ENCODE measurements at regions of chr20 and their contacts with region 1.

Region 1: DNA sequence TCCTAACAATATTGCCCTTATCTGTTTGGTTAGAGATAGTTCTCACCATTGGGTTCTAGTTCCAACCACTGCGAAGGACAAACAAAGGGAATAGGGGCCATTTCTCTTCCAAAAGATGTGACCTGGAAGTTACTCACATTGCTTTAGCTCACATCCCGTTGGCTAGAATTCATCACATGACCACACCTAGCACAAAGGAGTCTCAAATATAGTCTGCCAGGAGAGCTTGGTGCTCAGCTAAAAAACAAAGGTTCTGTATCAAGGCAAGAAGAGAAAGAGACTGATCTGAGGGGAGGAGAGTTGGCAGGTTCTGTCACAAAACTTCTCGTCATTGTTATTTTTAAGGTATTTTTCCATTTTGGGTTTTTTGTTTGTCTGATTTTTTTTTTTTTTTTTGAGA is 69.8 kb upstream of the GNRH2 start:
- DNase-seq: no peak
- ATAC-seq: no peak
- H3K4me3 ChIP-seq: no peak overlapping the region
- H3K27ac ChIP-seq: no peak overlapping the region
- H3K4me1 ChIP-seq: no peaks in the 10 kb centered on the region
- H3K27me3 ChIP-seq: no peaks in the 10 kb centered on the region
- CTCF ChIP-seq: no peak

Region 2: GRCh38 chr20:2005831-2006426 is 967.6 kb before region 1 on chr20:
- CTCF ChIA-PET with region 1: interaction called, 11 read pairs
- POLR2A ChIA-PET with region 1: no interaction called
- intact Hi-C with region 1: no loop called
- DNase-seq: peak; percentile 81
- ATAC-seq: peak; percentile 54; the same call in 1 of the 2 replicates
- H3K4me3 ChIP-seq: no peak overlapping the region
- H3K27ac ChIP-seq: no peak overlapping the region
- H3K4me1 ChIP-seq: no peaks in the 10 kb centered on the region
- H3K27me3 ChIP-seq: peaks cover 33% of the 10 kb centered on the region; the same call in 1 of the 2 replicates
- CTCF ChIP-seq: no peak

Region 3: GRCh38 chr20:2873747-2874041 is 99.9 kb before region 1 on chr20:
- CTCF ChIA-PET with region 1: no interaction called
- POLR2A ChIA-PET with region 1: no interaction called
- intact Hi-C with region 1: no loop called
- DNase-seq: peak; percentile 12
- ATAC-seq: no peak; the same call in 1 of the 2 replicates
- H3K4me3 ChIP-seq: peak overlapping the region; percentile 99
- H3K27ac ChIP-seq: no peak overlapping the region
- H3K4me1 ChIP-seq: peaks cover 37% of the 10 kb centered on the region
- H3K27me3 ChIP-seq: no peaks in the 10 kb centered on the region
- CTCF ChIP-seq: no peak

Region 4: DNA sequence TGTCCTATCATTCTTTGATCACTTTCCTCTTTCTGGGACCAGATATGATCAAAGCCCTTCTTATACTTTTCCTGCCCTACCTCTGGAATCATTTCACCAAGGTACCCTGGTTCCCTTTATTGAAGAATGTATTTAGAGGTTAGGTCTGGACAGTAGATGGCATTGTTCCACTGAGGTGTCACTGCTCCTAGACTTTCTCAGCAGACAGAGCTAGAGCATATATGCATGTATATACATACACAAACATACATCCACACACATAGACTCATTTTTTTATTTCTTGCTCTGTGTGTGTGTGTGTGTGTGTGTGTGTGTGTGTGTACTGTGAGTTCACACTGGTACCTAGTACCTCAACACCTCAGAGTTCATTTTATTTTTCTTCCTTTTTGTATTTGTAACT is 59.4 kb before region 1 on chr20:
- CTCF ChIA-PET with region 1: no interaction called
- POLR2A ChIA-PET with region 1: no interaction called
- intact Hi-C with region 1: no loop called
- DNase-seq: peak; percentile 50
- ATAC-seq: peak; percentile 83
- H3K4me3 ChIP-seq: no peak overlapping the region
- H3K27ac ChIP-seq: no peak overlapping the region
- H3K4me1 ChIP-seq: peaks cover 7% of the 10 kb centered on the region
- H3K27me3 ChIP-seq: no peaks in the 10 kb centered on the region
- CTCF ChIP-seq: peak; percentile 55; the same call in 1 of the 2 replicates

Region 5: DNA sequence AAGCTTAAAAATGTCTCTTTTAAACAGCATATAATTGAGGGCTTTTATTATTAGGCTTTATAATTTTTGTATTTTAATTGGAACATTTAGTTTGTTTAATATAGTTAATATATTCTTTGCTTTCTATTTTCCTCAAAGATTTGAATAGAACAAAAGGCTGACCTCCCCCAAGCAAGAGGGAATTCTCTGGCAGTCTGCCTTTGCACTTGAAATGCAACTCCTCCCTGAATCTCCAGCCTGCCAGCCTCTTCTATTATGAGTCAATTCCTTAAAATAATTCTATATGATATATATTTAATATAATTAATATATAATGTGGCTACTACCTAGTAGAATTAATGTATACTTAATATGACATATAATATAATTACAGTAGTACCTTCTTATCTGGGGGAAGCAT is 31.1 kb before region 1 on chr20:
- CTCF ChIA-PET with region 1: no interaction called
- POLR2A ChIA-PET with region 1: no interaction called
- intact Hi-C with region 1: no loop called
- DNase-seq: no peak
- ATAC-seq: no peak
- H3K4me3 ChIP-seq: no peak overlapping the region
- H3K27ac ChIP-seq: no peak overlapping the region
- H3K4me1 ChIP-seq: no peaks in the 10 kb centered on the region
- H3K27me3 ChIP-seq: no peaks in the 10 kb centered on the region
- CTCF ChIP-seq: no peak

Measured in PC-3 (cell line).